HCT116 (cell line): ENCODE measurements at regions of chr16 and their contacts with region 1.

Region 1: DNA sequence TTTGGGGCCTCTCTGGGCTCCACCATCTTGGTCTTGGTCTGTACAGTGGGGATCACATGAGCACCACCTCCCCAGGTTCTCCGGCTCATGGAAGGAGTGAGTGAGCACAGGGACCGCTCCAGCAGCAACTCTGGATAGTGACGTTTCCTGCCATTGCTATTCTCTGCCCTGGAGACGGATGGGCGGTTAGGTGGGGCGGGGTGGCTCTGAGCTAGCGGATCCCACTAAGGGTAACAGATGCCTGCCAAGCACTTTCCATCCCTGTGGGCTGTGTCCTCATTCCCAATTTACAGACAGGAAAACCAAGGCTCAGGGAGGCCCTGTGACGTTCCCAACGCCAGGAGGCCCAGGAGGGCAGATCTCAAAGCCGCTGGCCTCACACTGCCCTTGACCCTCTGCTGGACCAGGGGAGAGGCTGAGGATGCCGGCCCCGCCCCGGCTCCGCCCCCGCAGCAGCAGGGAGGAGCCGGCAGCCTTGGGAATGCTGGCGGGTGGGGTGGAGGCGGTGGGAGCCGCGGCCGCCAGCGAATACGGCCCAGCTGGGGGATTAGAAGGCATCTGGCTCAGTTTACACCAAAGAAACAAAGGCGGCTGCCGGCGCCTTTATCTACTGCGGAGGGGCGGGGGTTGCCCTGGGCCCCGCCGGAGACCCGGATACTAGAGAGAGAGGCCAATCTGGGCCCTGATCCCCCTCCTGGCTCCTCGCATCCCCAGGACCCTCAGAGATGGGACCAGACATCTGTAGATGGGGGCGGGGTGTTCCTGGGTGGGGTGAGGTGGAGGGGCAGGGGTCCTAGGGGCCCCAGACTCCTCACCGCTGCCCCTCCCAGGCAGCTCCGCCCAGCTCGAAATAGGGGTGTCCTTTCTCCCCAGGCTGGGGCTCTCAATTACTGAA is 122.3 kb upstream of the CIBAR2 start:
- DNase-seq: no peak
- ATAC-seq: peak; percentile 71
- H3K4me3 ChIP-seq: peak overlapping the region; percentile 43 to 61
- H3K27ac ChIP-seq: peak overlapping the region; percentile 59
- H3K4me1 ChIP-seq: peaks cover 47 to 57% of the 10 kb centered on the region in 2 experiments
- H3K27me3 ChIP-seq: no peaks in the 10 kb centered on the region
- CTCF ChIP-seq: no peak
- POLR2A ChIP-seq: no peak
- RAD21 ChIP-seq: no peak

Region 2: GRCh38 chr16:83402967-83403366 is 1831.6 kb before region 1 on chr16:
- CTCF ChIA-PET with region 1: no interaction called
- POLR2A ChIA-PET with region 1: no interaction called
- RAD21 ChIA-PET with region 1: no interaction called
- intact Hi-C with region 1: no loop called
- DNase-seq: no peak
- ATAC-seq: no peak
- H3K4me3 ChIP-seq: no peak overlapping the region
- H3K27ac ChIP-seq: no peak overlapping the region
- H3K4me1 ChIP-seq: no peaks in the 10 kb centered on the region
- H3K27me3 ChIP-seq: peaks cover 4% of the 10 kb centered on the region; the same call in 1 of the 2 replicates
- CTCF ChIP-seq: no peak
- POLR2A ChIP-seq: no peak
- RAD21 ChIP-seq: no peak

Region 3: GRCh38 chr16:84933774-84934631 is 300.6 kb before region 1 on chr16:
- CTCF ChIA-PET with region 1: no interaction called
- POLR2A ChIA-PET with region 1: no interaction called
- RAD21 ChIA-PET with region 1: no interaction called
- intact Hi-C with region 1: loop called (anchors 10 kb)
- DNase-seq: no peak
- ATAC-seq: no peak
- H3K4me3 ChIP-seq: no peak overlapping the region
- H3K27ac ChIP-seq: no peak overlapping the region
- H3K4me1 ChIP-seq: peaks cover 0 to 3% of the 10 kb centered on the region in 2 experiments; a peak in 1 of 4 replicates
- H3K27me3 ChIP-seq: no peaks in the 10 kb centered on the region
- CTCF ChIP-seq: no peak
- POLR2A ChIP-seq: no peak
- RAD21 ChIP-seq: no peak

Region 4: GRCh38 chr16:85172455-85173145 is 62.0 kb before region 1 on chr16:
- CTCF ChIA-PET with region 1: interaction called, 4 read pairs
- POLR2A ChIA-PET with region 1: no interaction called
- RAD21 ChIA-PET with region 1: interaction called in 1 of 2 experiments, 3 read pairs
- intact Hi-C with region 1: loop called (anchors 5 kb)
- DNase-seq: peak; percentile 65
- ATAC-seq: peak; percentile 69
- H3K4me3 ChIP-seq: peak overlapping the region; percentile 15 to 40; a peak in 3 of 4 replicates
- H3K27ac ChIP-seq: peak overlapping the region; percentile 76; the same call in 1 of the 2 replicates
- H3K4me1 ChIP-seq: peaks cover 45 to 62% of the 10 kb centered on the region in 2 experiments
- H3K27me3 ChIP-seq: no peaks in the 10 kb centered on the region
- CTCF ChIP-seq: peak in 2 of 3 experiments; percentile 73 to 80; a peak in 4 of 6 replicates
- POLR2A ChIP-seq: no peak
- RAD21 ChIP-seq: no peak

Region 5: GRCh38 chr16:85220125-85220839 is 14.3 kb before region 1 on chr16:
- CTCF ChIA-PET with region 1: no interaction called
- POLR2A ChIA-PET with region 1: no interaction called
- RAD21 ChIA-PET with region 1: no interaction called
- intact Hi-C with region 1: no loop called
- DNase-seq: no peak
- ATAC-seq: no peak
- H3K4me3 ChIP-seq: no peak overlapping the region
- H3K27ac ChIP-seq: no peak overlapping the region; the same call in 1 of the 2 replicates
- H3K4me1 ChIP-seq: peaks cover 5 to 12% of the 10 kb centered on the region in 2 experiments; a peak in 3 of 4 replicates
- H3K27me3 ChIP-seq: no peaks in the 10 kb centered on the region
- CTCF ChIP-seq: no peak
- POLR2A ChIP-seq: no peak
- RAD21 ChIP-seq: no peak

Region 6: GRCh38 chr16:85245307-85246172 is 11.0 kb after region 1 on chr16:
- CTCF ChIA-PET with region 1: interaction called, 17 read pairs
- POLR2A ChIA-PET with region 1: no interaction called
- RAD21 ChIA-PET with region 1: no interaction called
- intact Hi-C with region 1: no loop called
- DNase-seq: peak; percentile 57
- ATAC-seq: peak; percentile 93
- H3K4me3 ChIP-seq: no peak overlapping the region
- H3K27ac ChIP-seq: no peak overlapping the region
- H3K4me1 ChIP-seq: peaks cover 5 to 20% of the 10 kb centered on the region in 2 experiments; a peak in 3 of 4 replicates
- H3K27me3 ChIP-seq: no peaks in the 10 kb centered on the region
- CTCF ChIP-seq: peak; percentile 84 to 99 (median 97); a peak in 5 of 6 replicates
- POLR2A ChIP-seq: no peak
- RAD21 ChIP-seq: peak; percentile 83